Gastrocnemius medialis (tissue), 4 donors: ENCODE measurements at regions of chrX and their contacts with region 1.

Region 1: GRCh38 chrX:153927922-153928760 is 2.1 kb upstream of the ARHGAP4 start:
- DNase-seq: peak; percentile 91 to 96
- ATAC-seq: peak; percentile 89
- H3K4me3 ChIP-seq: peak overlapping the region; percentile 55 to 74 (median 68)
- H3K27ac ChIP-seq: peak overlapping the region; percentile 85 to 97 (median 90)
- H3K4me1 ChIP-seq: peaks cover 10 to 17% of the 10 kb centered on the region in 2 donors
- H3K27me3 ChIP-seq: no peaks in the 10 kb centered on the region
- CTCF ChIP-seq: peak in 4 of 5 experiments; percentile 24 to 27 (median 25)
- POLR2A ChIP-seq: peak; percentile 88 to 92

Region 2: GRCh38 chrX:153953342-153953830 is 25.2 kb after region 1 on chrX:
- in situ Hi-C with region 1: no loop called
- intact Hi-C with region 1: loop called (anchors 1 kb)
- DNase-seq: peak; percentile 32 to 60
- ATAC-seq: peak; percentile 67 to 82
- H3K4me3 ChIP-seq: no peak overlapping the region
- H3K27ac ChIP-seq: peak overlapping the region in 1 of 4 donors; percentile 59
- H3K4me1 ChIP-seq: no peaks in the 10 kb centered on the region
- H3K27me3 ChIP-seq: no peaks in the 10 kb centered on the region
- CTCF ChIP-seq: peak; percentile 81 to 98 (median 97)
- POLR2A ChIP-seq: no peak

Region 3: DNA sequence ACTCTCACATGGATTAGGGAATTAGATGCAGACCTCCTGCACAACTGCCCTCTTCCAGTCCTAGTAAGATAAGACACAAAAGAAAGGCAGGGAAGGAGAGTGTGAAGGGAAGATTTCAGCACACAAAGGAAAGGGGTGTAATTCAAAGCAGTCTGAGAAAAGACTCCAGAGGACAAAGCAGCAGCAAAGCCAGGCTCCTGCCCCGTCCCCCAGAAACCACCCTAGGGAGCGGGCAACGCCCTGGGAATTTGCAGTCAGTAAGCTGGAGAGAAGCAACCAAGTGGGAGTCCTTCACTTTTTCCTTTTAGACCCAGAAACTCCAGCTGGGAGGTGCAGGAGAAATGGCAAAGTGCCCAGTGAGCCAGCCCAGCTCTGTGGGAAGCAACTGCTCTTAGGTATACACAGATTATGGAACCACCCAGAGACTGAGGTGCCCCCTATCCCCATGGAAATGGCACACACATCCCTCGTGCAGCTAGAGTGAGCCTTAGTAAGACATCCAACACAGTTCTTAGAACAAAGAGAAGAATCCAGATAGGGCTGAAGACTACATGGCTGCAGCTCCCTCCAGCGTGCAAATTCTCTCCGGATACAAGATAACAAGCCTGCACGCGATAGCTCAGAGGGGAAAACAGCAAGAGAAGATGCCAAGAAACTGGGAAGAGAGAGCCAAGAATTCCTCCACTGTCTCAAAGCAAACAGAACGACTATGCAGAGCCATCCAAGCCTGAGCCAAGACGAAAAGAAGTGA is 118.1 kb after region 1 on chrX:
- in situ Hi-C with region 1: no loop called
- intact Hi-C with region 1: loop called (anchors 5 kb)
- DNase-seq: peak; percentile 23 to 31
- ATAC-seq: peak; percentile 15 to 48
- H3K4me3 ChIP-seq: no peak overlapping the region
- H3K27ac ChIP-seq: peak overlapping the region; percentile 82 to 89 (median 88)
- H3K4me1 ChIP-seq: peaks cover 76 to 85% of the 10 kb centered on the region in 2 donors
- H3K27me3 ChIP-seq: no peaks in the 10 kb centered on the region
- CTCF ChIP-seq: no peak
- POLR2A ChIP-seq: no peak

Region 4: GRCh38 chrX:154515878-154516655 is 587.9 kb after region 1 on chrX and contains the start of gene FAM3A:
- in situ Hi-C with region 1: no loop called
- intact Hi-C with region 1: loop called (anchors 10 kb)
- DNase-seq: peak; percentile 93
- ATAC-seq: peak; percentile 86 to 92
- H3K4me3 ChIP-seq: peak within 1 kb of the TSS; percentile 68 to 89 (median 72)
- H3K27ac ChIP-seq: peak within 1 kb of the TSS; percentile 88 to 96 (median 95)
- H3K4me1 ChIP-seq: peaks cover 0 to 12% of the 10 kb centered on the region in 2 donors
- H3K27me3 ChIP-seq: no peaks in the 10 kb centered on the region
- CTCF ChIP-seq: no peak
- POLR2A ChIP-seq: peak; percentile 88 to 89
- total RNA-seq, gene FAM3A: 28.3 to 44.5 (median 37.8) TPM